ENCODE measurements at regions of chr4 and their contacts with region 1.

Region 1: DNA sequence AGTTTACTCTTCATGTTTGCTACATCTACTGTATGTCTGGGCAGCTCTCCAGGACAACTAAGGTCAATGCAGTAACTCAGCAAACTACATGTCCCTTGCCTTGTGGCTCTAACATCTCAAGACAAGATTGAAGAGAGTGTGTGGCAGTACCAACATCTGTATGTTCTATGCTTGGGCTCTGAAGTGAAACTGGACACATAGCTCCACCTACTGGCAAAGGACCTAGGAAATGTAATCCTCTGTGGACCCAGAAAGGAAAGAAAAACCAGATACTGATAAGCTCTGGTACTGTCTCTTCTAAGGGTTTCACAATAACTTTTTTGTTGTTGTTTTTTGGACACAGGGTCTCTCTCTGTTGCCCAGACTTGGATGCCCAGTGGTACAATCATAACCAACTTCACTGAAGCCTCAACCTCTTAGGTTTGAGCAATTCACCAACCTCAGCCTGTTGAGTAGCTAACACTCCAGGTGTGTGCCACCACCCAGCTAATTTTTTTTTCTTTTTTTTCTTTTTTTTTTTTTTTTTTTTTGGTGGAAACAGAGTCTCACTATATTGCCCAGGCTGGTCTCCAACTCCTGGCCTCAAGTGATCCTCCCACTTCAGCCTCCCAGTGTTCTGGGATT is 64.1 kb downstream of the QDPR start:
- DNase-seq: peak; percentile 79
- ATAC-seq: peak; percentile 98
- H3K4me3 Mint-ChIP-seq: no peak overlapping the region
- H3K27ac Mint-ChIP-seq: no peak overlapping the region
- H3K4me1 Mint-ChIP-seq: peaks cover 5% of the 10 kb centered on the region
- H3K27me3 Mint-ChIP-seq: no peaks in the 10 kb centered on the region

Region 2: GRCh38 chr4:17336524-17336961 is 111.2 kb before region 1 on chr4:
- CTCF ChIA-PET with region 1: interaction called, 10 read pairs
- POLR2A ChIA-PET with region 1: no interaction called
- DNase-seq: peak; percentile 87
- ATAC-seq: peak; percentile 99
- H3K4me3 Mint-ChIP-seq: peak overlapping the region; percentile 32
- H3K27ac Mint-ChIP-seq: peak overlapping the region; percentile 87
- H3K4me1 Mint-ChIP-seq: peaks cover 31% of the 10 kb centered on the region
- H3K27me3 Mint-ChIP-seq: no peaks in the 10 kb centered on the region

Region 3: GRCh38 chr4:17347445-17347844 is 100.3 kb before region 1 on chr4:
- CTCF ChIA-PET with region 1: interaction called, 49 read pairs
- POLR2A ChIA-PET with region 1: no interaction called
- DNase-seq: peak; percentile 50
- ATAC-seq: peak; percentile 64
- H3K4me3 Mint-ChIP-seq: no peak overlapping the region
- H3K27ac Mint-ChIP-seq: no peak overlapping the region
- H3K4me1 Mint-ChIP-seq: no peaks in the 10 kb centered on the region
- H3K27me3 Mint-ChIP-seq: peaks cover 5% of the 10 kb centered on the region

Region 4: DNA sequence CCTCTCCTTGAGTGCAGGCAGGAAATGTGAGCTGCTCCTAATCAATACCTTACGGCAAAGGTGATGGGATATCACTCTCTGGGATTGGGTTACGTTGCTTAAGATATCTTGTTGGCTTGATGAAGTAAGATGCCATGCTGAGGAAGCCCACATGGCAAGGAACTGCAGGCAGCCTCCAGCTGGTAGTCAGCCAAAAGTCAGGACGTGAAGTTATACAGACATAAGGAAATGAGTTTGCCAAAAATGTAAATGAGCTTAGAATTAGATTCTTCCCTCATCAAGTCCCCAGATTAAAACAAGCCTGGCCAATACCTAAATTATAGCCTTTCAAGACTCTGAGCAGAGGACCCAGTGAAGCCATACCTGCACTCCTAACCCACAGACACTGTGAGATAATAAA is 90.9 kb before region 1 on chr4:
- CTCF ChIA-PET with region 1: interaction called, 11 read pairs
- POLR2A ChIA-PET with region 1: no interaction called
- DNase-seq: no peak
- ATAC-seq: no peak
- H3K4me3 Mint-ChIP-seq: no peak overlapping the region
- H3K27ac Mint-ChIP-seq: no peak overlapping the region
- H3K4me1 Mint-ChIP-seq: no peaks in the 10 kb centered on the region
- H3K27me3 Mint-ChIP-seq: peaks cover 22% of the 10 kb centered on the region

Region 5: DNA sequence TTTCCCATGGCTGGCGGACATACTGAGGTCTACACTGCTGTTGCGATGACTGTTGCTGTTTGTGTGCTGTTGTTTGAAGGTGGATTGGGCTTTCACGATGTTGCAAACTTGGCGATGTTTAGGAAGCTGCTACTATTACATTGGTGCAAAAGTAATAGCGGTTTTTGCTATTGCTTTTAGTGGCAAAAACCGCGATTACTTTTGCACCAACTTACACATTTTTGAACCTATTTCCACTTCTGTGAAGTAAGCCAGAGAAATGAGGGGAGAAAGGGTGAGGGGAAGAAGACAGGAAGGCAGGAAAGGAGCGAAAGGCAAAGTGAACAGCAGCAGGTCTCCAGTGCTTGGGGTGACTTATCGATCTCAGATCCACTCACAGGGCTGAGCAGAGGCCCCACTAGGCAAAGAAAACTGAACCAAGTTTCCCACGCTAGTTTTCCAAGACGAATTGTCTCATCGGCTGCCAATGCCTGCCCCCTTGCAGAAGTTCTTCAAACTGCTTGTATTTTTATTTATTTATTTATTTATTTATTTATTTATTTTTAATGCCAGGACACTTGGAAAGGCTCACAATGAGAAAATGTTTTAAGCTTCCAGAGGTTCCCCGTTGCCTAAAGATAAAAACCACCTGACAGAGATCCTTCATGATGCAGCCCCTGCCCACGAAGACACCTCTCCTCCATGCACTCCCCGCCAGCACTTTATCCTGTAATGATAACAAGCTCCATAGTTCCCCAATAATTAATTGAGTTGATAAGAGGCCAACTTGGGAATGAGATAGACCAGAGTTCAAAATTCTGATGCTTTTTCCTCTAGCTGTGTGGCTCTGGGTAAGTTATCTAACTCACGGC is 20.8 kb after region 1 on chr4:
- CTCF ChIA-PET with region 1: interaction called, 21 read pairs
- POLR2A ChIA-PET with region 1: no interaction called
- DNase-seq: no peak
- ATAC-seq: no peak
- H3K4me3 Mint-ChIP-seq: no peak overlapping the region
- H3K27ac Mint-ChIP-seq: no peak overlapping the region
- H3K4me1 Mint-ChIP-seq: no peaks in the 10 kb centered on the region
- H3K27me3 Mint-ChIP-seq: no peaks in the 10 kb centered on the region